Dendritic cell treated with granulocyte-macrophage colony-stimulating factor and Interleukin-4, amounts not matched to agents 40 ng/mL and 50 ng/mL, for 4 days (primary cell): ENCODE measurements at regions of chr13 and their contacts with region 1.

Region 1: GRCh38 chr13:37495046-37495445 is 103.5 kb downstream of the POSTN start:
- H3K4me3 Mint-ChIP-seq: no peak overlapping the region
- H3K27ac Mint-ChIP-seq: no peak overlapping the region
- H3K4me1 Mint-ChIP-seq: no peaks in the 10 kb centered on the region
- H3K27me3 Mint-ChIP-seq: no peaks in the 10 kb centered on the region

Region 2: DNA sequence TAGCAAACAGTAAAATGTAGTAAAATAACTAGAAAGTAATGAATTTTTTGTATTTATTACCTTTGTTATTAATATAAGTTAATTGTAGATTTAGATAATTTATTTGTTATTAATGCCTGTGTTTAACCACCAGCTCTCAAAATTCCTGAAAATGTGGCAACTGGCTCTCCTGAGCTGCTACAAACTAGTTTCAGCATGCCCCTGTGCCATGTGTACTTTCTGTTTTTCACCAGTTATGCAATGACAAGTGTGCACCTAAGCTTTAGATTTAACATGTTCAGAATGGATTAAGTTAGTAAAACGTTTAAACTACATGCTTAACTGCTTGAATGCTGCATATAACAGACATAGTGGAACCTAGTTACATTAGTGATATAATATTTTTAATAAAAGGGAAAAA is 15.4 kb after region 1 on chr13:
- intact Hi-C with region 1: loop called (anchors 1 kb)
- H3K4me3 Mint-ChIP-seq: no peak overlapping the region
- H3K27ac Mint-ChIP-seq: no peak overlapping the region
- H3K4me1 Mint-ChIP-seq: no peaks in the 10 kb centered on the region
- H3K27me3 Mint-ChIP-seq: no peaks in the 10 kb centered on the region

Region 3: GRCh38 chr13:37701972-37702371 is 206.9 kb after region 1 on chr13:
- intact Hi-C with region 1: no loop called
- H3K4me3 Mint-ChIP-seq: no peak overlapping the region
- H3K27ac Mint-ChIP-seq: no peak overlapping the region
- H3K4me1 Mint-ChIP-seq: no peaks in the 10 kb centered on the region
- H3K27me3 Mint-ChIP-seq: no peaks in the 10 kb centered on the region